Gastrocnemius medialis (tissue), 4 donors: ENCODE measurements at regions of chr19 and their contacts with region 1.

Region 1: DNA sequence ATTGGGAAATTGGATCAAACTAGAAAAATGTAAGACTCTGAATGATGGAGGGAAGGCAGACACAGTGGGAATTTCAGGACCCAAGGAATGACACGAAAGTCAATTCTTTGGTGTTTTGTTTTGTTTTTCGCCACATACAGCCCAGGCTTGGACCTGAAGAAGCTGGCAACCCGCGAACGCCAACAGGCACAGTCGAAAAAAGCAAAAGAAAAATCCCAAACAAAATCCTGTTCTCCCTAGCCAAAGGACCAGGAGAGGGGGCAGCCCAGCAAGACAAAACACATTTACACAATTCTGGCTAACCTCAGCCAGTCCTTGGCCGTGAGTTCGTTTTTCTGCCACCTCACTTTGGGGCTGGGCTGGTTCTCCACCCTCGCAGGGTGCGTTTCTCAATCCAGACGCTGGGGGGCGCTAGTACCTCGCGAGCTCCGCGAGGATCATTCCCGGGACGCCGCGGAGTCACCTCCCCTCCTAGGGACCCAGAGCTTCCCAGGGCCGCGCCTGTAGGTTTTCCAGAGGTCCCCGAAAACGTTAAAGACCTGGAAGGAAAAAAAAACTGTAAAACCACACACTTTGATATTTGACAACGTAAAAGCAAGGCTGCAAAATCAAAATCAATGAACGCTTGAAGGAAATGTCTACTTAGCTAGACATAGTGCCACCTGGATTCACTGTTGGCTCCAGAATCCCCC is 34.9 kb upstream of the TPM4 start:
- DNase-seq: peak; percentile 26 to 33
- ATAC-seq: peak; percentile 70 to 85
- H3K4me3 ChIP-seq: peak overlapping the region in 3 of 4 donors; percentile 21 to 35 (median 32)
- H3K27ac ChIP-seq: no peak overlapping the region
- H3K4me1 ChIP-seq: peaks cover 0 to 7% of the 10 kb centered on the region in 2 donors
- H3K27me3 ChIP-seq: no peaks in the 10 kb centered on the region
- CTCF ChIP-seq: peak; percentile 43 to 91 (median 86)
- POLR2A ChIP-seq: no peak

Region 2: DNA sequence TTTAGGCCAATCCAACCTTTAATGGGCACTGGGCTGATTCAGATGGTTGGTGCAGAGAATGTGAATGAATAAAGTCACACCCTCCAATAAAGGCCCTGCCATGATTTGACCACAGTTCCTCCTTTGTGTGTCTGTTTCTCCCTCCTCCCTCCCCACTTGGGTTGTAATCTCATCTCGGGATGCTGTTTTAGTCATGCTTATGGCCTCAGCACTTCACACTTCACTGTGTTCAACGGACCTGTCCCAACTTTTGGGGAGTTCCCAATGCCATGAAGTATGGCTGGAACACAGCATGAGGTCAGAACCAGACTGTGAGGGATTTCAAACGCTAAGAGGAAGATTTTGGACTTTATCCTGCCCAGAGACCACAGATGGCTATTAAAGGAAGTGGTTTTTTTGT is 64.7 kb after region 1 on chr19:
- in situ Hi-C with region 1: loop called in 1 of 4 experiments (anchors 10 kb)
- intact Hi-C with region 1: loop called (anchors 1 kb)
- DNase-seq: no peak
- ATAC-seq: no peak
- H3K4me3 ChIP-seq: no peak overlapping the region
- H3K27ac ChIP-seq: no peak overlapping the region
- H3K4me1 ChIP-seq: peaks cover 0 to 3% of the 10 kb centered on the region in 2 donors
- H3K27me3 ChIP-seq: no peaks in the 10 kb centered on the region
- CTCF ChIP-seq: no peak
- POLR2A ChIP-seq: no peak

Region 3: DNA sequence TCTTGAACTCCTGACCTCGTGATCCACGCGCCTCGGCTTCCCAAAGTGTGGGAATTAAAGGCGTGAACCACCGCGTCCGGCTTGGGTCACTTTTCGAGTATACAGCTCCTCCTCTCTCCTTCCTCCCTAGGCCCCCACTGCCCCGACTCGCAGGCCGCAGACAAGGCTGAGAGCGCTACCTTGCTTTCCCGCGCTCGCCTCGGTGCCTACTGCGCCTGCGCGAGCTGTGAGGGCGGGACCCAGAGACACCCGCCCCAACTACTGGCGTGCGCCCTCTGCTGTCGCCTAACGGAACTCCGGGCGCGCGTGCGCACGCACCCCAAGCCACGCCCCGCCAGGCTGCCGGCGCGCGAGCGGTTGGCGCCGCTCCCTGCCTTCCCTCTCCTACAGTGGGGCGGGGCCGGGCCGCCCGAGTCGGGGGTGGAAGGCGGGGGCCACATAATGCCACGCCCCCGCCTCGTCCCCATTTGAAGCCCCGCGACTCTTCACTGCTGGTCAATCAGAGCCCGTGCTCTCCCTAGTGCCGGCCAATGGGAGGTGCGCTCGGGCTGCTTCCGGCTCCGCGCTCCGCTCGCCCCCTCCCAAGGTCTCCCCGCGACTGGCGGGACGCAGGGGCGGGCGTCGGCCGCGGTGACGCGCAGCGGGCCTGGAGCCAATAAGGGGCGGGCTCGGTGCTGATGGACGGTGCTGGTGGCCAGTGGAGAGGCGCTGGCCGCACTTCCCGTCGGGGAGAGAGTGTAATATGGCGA is 69.9 kb after region 1 on chr19 and contains the start of gene RAB8A:
- in situ Hi-C with region 1: loop called in 1 of 4 experiments (anchors 10 kb)
- intact Hi-C with region 1: loop called (anchors 1 kb)
- DNase-seq: peak; percentile 98 to 99
- ATAC-seq: peak; percentile 96 to 97
- H3K4me3 ChIP-seq: peak within 1 kb of the TSS; percentile 87 to 96 (median 90)
- H3K27ac ChIP-seq: peak within 1 kb of the TSS; percentile 90 to 95 (median 94)
- H3K4me1 ChIP-seq: peaks cover 11 to 20% of the 10 kb centered on the region in 2 donors
- H3K27me3 ChIP-seq: no peaks in the 10 kb centered on the region
- CTCF ChIP-seq: peak; percentile 92 to 99 (median 99)
- POLR2A ChIP-seq: no peak
- total RNA-seq, gene RAB8A: 8.3 to 12.1 (median 9.2) TPM

Region 4: DNA sequence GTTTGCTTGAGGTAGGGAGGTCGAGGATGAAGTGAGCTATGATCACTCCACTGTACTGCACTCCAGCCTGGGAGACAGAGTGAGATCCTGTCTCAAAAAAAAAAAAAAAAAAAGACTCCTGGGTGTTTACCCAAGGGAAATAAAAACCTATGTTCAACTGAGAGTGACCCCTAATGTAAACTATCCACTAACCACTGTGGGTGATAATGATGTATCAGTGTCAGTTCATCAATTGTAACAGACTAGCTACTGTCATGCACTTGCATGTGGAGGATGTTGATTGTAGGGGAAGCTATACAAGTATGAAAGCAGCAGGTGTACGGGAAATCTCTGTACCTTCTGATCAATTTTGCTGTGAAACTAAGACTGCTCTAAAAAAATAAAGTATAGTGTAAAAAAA is 134.5 kb after region 1 on chr19:
- in situ Hi-C with region 1: loop called in 3 of 4 experiments (anchors 5 to 25 kb)
- intact Hi-C with region 1: no loop called
- DNase-seq: no peak
- ATAC-seq: no peak
- H3K4me3 ChIP-seq: no peak overlapping the region
- H3K27ac ChIP-seq: no peak overlapping the region
- H3K4me1 ChIP-seq: no peaks in the 10 kb centered on the region
- H3K27me3 ChIP-seq: peaks cover 0 to 7% (median 2%) of the 10 kb centered on the region in 3 donors
- CTCF ChIP-seq: no peak
- POLR2A ChIP-seq: no peak